Activated CD4-positive, alpha-beta memory T cell treated with anti-CD3 and anti-CD28 coated beads, Interleukin-2, amount 10 ng/mL, durations not matched to agents 7 days and 5 days (primary cell): ENCODE measurements at regions of chr6 and their contacts with region 1.

Region 1: GRCh38 chr6:593139-593906 is 63.6 kb downstream of the HUS1B start:
- DNase-seq: peak; percentile 70
- H3K4me3 Mint-ChIP-seq: no peak overlapping the region
- H3K27ac Mint-ChIP-seq: no peak overlapping the region
- H3K4me1 Mint-ChIP-seq: peaks cover 16% of the 10 kb centered on the region
- H3K27me3 Mint-ChIP-seq: no peaks in the 10 kb centered on the region

Region 2: DNA sequence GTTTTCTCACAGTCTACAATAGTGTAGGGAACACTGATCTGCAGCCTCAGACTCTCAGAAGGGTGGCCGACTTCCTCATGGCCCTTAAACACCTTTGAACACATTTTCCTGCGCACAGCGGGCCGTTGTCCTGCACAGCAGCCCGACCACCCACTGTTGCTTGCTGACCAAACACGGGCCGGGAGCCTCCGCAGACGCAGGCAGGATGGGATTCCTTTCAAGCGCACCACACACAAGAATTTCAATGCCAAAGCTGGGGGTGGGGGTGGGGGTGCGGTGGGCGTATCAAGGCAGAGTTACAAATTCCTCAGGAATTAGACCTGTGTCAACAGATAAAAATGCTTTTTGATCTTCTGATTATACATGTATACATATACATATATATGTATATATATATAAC is 11.0 kb before region 1 on chr6:
- CTCF ChIA-PET with region 1: interaction called, 32 read pairs
- POLR2A ChIA-PET with region 1: interaction called, 3 read pairs
- DNase-seq: no peak
- H3K4me3 Mint-ChIP-seq: peak overlapping the region; percentile 48
- H3K27ac Mint-ChIP-seq: peak overlapping the region; percentile 47
- H3K4me1 Mint-ChIP-seq: peaks cover 45% of the 10 kb centered on the region
- H3K27me3 Mint-ChIP-seq: no peaks in the 10 kb centered on the region

Region 3: GRCh38 chr6:656460-657252 is 63.3 kb after region 1 on chr6 and contains the start of gene HUS1B:
- CTCF ChIA-PET with region 1: no interaction called
- POLR2A ChIA-PET with region 1: no interaction called
- DNase-seq: no peak
- H3K4me3 Mint-ChIP-seq: no peak within 1 kb of the TSS
- H3K27ac Mint-ChIP-seq: no peak within 1 kb of the TSS
- H3K4me1 Mint-ChIP-seq: peaks cover 24% of the 10 kb centered on the region
- H3K27me3 Mint-ChIP-seq: no peaks in the 10 kb centered on the region
- total RNA-seq, gene HUS1B: 0.78 to 0.86 TPM